Activated naive CD8-positive, alpha-beta T cell treated with anti-CD3 and anti-CD28 coated beads, Interleukin-2, amount 10 ng/mL, durations not matched to agents 7 days and 5 days (primary cell): ENCODE measurements at regions of chr2 and their contacts with region 1.

Region 1: GRCh38 chr2:39135690-39136259 is 14.9 kb upstream of the SOS1 start:
- DNase-seq: no peak
- ATAC-seq: peak; percentile 49
- H3K4me3 Mint-ChIP-seq: peak overlapping the region; percentile 62
- H3K27ac Mint-ChIP-seq: peak overlapping the region; percentile 97
- H3K4me1 Mint-ChIP-seq: peaks cover 68% of the 10 kb centered on the region
- H3K27me3 Mint-ChIP-seq: no peaks in the 10 kb centered on the region

Region 2: DNA sequence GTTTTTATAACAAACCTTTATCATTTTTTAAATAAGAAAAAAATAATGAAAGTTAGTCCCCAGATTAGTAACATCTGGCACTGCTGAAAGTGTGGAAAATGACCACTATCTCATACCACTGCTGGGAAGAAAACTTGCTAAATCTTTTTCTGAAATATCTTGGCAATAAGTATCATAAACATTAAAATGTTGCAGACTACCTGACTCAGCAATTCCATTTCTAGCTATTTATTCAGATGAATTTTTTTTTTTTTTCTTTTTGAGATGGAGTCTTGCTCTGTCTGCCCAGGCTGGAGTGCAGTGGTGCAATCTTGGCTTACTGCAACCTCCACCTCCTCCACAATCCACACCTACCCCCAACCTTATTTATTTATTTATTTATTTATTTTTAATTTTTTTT is 20.3 kb after region 1 on chr2:
- POLR2A ChIA-PET with region 1: no interaction called
- DNase-seq: no peak
- ATAC-seq: no peak
- H3K4me3 Mint-ChIP-seq: no peak overlapping the region
- H3K27ac Mint-ChIP-seq: no peak overlapping the region
- H3K4me1 Mint-ChIP-seq: peaks cover 3% of the 10 kb centered on the region
- H3K27me3 Mint-ChIP-seq: peaks cover 3% of the 10 kb centered on the region

Region 3: GRCh38 chr2:39216346-39217191 is 80.8 kb after region 1 on chr2:
- POLR2A ChIA-PET with region 1: interaction called, 119 read pairs
- DNase-seq: peak; percentile 73
- ATAC-seq: peak; percentile 88
- H3K4me3 Mint-ChIP-seq: peak overlapping the region; percentile 71
- H3K27ac Mint-ChIP-seq: peak overlapping the region; percentile 96
- H3K4me1 Mint-ChIP-seq: peaks cover 68% of the 10 kb centered on the region
- H3K27me3 Mint-ChIP-seq: no peaks in the 10 kb centered on the region

Region 4: GRCh38 chr2:39266139-39266805 is 130.5 kb after region 1 on chr2:
- POLR2A ChIA-PET with region 1: no interaction called
- DNase-seq: no peak
- ATAC-seq: peak; percentile 87
- H3K4me3 Mint-ChIP-seq: peak overlapping the region; percentile 35
- H3K27ac Mint-ChIP-seq: peak overlapping the region; percentile 77
- H3K4me1 Mint-ChIP-seq: peaks cover 22% of the 10 kb centered on the region
- H3K27me3 Mint-ChIP-seq: no peaks in the 10 kb centered on the region